ENCODE measurements at regions of chr3 and their contacts with region 1.

Region 1: DNA sequence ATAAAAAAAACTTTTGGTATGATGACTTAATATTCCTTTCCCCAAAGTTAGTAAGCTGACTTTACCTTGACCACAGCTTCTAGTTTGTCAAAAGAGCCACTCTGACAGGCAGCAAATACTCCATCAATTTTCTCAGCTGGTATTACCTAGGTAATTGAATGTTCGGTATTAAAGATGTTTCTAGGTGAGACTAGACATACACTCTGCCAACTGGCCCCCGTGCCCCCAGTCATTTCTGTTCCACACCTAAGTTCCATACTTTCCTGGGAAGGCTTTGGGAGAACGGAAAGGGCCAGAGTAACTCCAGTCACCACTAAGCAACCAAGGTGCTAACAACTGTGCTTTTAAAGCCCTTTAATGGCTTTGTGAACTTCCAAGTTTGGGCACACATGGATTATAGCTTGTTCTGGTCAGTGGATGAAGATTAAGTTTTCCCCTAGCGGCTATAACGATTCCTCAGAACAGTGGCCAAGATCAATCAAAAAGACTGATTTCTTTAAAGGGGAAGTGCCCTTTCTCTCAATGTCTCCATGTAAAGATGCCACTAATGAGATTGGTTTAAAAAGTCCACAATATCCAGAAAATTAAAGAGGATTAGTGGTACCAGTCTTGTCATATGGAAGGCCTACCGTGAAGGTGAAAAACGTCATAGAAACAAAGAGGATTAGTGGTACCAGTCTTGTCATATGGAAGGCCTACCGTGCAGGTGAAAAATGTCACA is 7.0 kb downstream of the EIF4A2 start:
- DNase-seq: peak in 1 of 2 experiments; percentile 68
- H3K4me3 ChIP-seq: no peak overlapping the region
- H3K27ac ChIP-seq: peak overlapping the region; percentile 34
- H3K4me1 ChIP-seq: peaks cover 19% of the 10 kb centered on the region
- H3K27me3 ChIP-seq: no peaks in the 10 kb centered on the region
- CTCF ChIP-seq: no peak; the same call in 1 of the 2 replicates

Region 2: DNA sequence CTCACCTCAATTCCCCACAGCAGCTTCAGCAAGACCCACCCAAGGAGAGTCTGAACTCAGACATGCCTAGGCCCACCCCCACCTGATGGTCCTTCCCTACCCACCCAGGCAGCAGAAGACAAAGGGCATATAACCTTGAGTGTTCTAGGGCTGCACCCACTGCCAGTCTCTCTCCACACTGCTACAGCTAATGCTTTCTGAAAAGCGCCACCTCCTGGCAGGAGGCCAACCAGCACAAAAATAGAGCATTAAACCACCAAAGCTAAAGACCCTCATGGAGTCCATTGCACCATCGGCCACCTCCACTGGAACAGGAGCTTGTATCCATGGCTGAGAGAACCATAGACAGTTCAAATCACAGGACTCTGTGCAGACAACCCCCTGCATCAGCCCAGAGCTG is 360.2 kb after region 1 on chr3:
- CTCF ChIA-PET with region 1: no interaction called
- POLR2A ChIA-PET with region 1: interaction called, 12 read pairs
- intact Hi-C with region 1: no loop called
- DNase-seq: no peak
- H3K4me3 ChIP-seq: no peak overlapping the region
- H3K27ac ChIP-seq: no peak overlapping the region
- H3K4me1 ChIP-seq: no peaks in the 10 kb centered on the region
- H3K27me3 ChIP-seq: no peaks in the 10 kb centered on the region
- CTCF ChIP-seq: no peak; the same call in 1 of the 2 replicates

Measured in PC-9 (cell line).